Posterior vena cava (tissue), 2 donors: ENCODE measurements at regions of chr5 and their contacts with region 1.

Region 1: DNA sequence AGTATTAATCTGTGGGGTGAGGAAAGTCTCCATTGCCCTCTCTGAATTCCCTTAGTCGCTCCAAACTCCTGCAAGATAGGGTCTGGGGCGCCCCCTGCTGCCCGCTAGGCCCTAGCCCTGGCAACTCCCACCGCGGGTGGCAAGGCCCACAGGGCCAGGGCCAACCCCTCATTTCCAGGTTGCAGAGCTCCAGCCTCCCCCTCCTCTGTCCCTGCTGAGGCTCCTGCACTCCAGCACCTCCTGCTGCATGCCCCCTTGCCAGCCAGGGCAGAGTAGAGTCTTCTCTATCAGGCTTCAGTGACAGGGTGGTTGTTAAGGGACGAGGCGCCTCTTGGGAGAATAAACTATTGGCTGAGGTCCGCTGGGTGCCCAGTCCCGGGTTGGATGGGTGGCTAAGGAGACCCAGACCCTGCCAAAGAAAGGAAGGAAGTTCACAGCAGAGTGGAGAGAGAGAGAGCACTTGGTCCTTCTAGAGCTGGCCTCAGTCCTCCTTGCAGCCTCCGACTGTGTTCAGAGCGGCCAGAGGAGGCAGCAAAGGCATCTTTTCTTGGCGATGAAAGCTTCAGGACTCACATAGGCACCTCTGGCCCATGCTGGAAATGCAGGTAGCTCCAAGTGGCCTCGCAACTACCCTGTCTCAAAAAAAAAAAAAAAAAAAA is 45.6 kb downstream of the SAR1B start:
- DNase-seq: peak; percentile 95

Region 2: GRCh38 chr5:134304311-134304710 is 282.7 kb before region 1 on chr5:
- intact Hi-C with region 1: loop called (anchors 2 to 5 kb)
- DNase-seq: no peak

Region 3: DNA sequence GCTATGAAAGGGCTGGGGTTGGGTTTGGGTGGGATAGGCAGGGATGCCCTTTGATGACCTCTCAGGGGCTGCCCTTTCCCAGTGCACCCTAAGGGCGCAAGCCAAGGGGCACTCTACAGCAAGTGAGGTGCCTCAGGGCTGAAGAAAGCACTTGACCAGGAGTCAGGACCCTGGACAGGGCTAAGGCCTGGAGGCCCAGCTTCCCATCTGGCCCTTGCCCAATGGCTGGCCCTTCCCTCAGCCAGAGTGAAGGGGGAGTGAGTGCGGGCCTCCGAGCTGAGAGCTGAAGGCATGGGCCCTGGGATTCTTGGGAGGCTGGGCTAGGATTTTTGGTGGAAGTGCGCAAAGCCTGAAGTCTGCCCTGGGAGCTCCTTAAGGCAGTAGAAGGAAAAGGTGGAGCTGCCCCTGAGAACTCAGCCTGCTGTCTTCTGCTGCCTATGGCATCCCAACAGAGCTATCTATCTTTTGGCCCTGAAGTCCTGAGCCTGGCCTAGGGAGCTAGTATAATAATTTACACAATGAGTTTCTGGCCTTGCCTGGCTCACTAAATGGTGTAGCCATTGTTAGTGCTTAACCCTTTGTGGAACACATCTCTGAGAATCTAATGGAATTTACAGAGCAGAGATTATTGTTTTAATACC is 45.1 kb before region 1 on chr5:
- intact Hi-C with region 1: no loop called
- DNase-seq: peak; percentile 86